Common myeloid progenitor, CD34-positive (primary cell): ENCODE measurements at regions of chr4 and their contacts with region 1.

Region 1: DNA sequence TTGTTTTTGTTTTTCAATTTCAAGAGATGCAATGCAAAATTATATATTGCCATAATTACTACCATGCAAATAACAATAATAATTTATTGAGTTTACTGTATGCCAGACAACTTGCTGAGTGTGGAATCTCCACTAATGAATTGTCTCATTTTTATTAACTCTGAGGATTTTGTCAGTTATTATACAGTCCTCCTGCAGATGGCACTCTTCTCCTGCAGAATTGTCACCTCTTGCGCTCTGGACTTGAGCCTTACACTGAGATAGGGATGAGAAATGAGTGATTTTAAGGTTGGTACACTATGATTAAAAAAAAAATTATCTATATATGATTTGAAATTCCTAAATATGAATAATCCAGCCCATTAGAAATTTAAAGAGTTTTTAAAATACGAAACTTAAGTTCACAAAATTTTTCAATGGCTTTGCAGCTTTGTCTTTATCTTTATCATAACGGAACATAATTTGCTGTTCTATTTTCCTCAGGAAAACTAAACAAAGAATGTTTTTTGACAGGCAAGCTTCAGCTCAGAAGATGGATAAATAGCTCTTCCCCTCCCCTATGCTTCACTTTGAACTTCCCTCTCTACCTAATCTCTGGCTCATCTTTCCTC is 12.7 kb upstream of the PAQR3 start:
- DNase-seq: peak; percentile 41 to 71 (median 64)
- H3K4me3 ChIP-seq: no peak overlapping the region
- H3K27ac ChIP-seq: no peak overlapping the region
- H3K4me1 ChIP-seq: peaks cover 0 to 2% (median 0%) of the 10 kb centered on the region in 4 experiments
- H3K27me3 ChIP-seq: no peaks in the 10 kb centered on the region

Region 2: GRCh38 chr4:78971326-78971725 is 19.4 kb after region 1 on chr4:
- CTCF ChIA-PET with region 1: interaction called, 11 read pairs
- POLR2A ChIA-PET with region 1: no interaction called
- DNase-seq: no peak
- H3K4me3 ChIP-seq: no peak overlapping the region
- H3K27ac ChIP-seq: no peak overlapping the region
- H3K4me1 ChIP-seq: peaks cover 10 to 19% (median 14%) of the 10 kb centered on the region in 4 experiments
- H3K27me3 ChIP-seq: no peaks in the 10 kb centered on the region

Region 3: GRCh38 chr4:79576429-79576753 is 624.4 kb after region 1 on chr4:
- CTCF ChIA-PET with region 1: interaction called, 36 read pairs
- POLR2A ChIA-PET with region 1: no interaction called
- DNase-seq: peak; percentile 69 to 82 (median 80)
- H3K4me3 ChIP-seq: no peak overlapping the region
- H3K27ac ChIP-seq: no peak overlapping the region
- H3K4me1 ChIP-seq: peaks cover 0 to 13% (median 10%) of the 10 kb centered on the region in 4 experiments
- H3K27me3 ChIP-seq: no peaks in the 10 kb centered on the region

Region 4: DNA sequence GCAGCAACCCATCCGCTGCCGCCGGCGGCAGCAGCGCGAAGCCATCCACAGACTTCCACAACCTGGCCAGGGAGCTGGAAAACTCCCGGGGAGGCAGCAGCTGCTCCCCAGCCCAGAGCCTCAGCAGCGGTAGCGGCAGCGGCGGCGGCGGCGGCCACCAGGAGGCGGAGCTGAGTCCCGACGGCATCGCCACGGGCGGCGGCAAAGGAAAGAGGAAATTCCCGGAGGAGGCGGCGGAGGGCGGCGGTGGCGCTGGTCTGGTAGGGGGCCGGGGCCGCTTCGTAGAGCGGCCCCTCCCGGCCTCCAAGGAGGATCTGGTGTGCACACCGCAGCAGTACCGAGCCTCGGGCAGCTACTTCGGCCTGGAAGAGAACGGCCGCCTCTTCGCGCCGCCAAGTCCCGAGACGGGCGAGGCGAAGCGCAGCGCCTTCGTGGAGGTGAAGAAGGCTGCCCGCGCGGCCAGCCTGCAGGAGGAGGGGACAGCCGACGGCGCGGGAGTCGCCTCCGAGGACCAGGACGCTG is 1250.3 kb after region 1 on chr4:
- CTCF ChIA-PET with region 1: interaction called, 10 read pairs
- POLR2A ChIA-PET with region 1: no interaction called
- DNase-seq: peak; percentile 75 to 86 (median 78)
- H3K4me3 ChIP-seq: peak overlapping the region; percentile 53 to 80 (median 75)
- H3K27ac ChIP-seq: peak overlapping the region; percentile 33 to 64
- H3K4me1 ChIP-seq: peaks cover 2 to 33% (median 23%) of the 10 kb centered on the region in 4 experiments
- H3K27me3 ChIP-seq: peaks cover 0 to 19% (median 2%) of the 10 kb centered on the region in 5 experiments

Region 5: DNA sequence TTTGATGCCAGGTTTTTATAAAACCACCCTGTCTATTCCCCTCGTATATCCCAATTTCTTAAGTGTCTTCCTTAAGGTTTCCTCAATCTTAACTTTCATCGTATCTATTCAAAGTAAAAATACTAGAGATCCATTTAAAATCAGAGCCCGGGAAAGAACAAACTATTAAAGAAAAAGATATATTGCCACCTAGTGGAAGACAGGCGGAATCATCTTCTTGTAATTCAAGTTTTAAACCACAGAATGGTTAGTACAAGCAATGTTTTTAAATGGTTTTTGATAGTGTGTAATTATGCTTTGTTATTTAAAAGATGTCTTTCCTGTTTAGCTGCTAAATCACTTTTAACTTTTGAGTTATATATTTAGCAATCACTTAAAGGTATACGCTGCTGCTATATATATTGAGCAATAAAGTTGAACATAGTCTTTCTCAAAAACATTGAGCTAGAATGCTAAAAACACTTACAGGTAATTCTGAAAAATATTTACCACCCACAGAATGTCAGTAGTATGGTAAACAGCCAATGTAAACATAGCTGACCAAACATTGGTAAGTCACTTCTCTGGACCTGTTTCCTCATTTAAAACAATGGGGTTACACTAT is 1263.6 kb after region 1 on chr4:
- CTCF ChIA-PET with region 1: interaction called, 11 read pairs
- POLR2A ChIA-PET with region 1: no interaction called
- DNase-seq: peak in 2 of 3 donors; percentile 50 to 61
- H3K4me3 ChIP-seq: no peak overlapping the region
- H3K27ac ChIP-seq: no peak overlapping the region
- H3K4me1 ChIP-seq: no peaks in the 10 kb centered on the region
- H3K27me3 ChIP-seq: peaks cover 0 to 3% (median 0%) of the 10 kb centered on the region in 5 experiments